OCI-LY7 (cell line): ENCODE measurements at regions of chr19 and their contacts with region 1.

Region 1: GRCh38 chr19:47273978-47274890 is at the start of gene INAFM1:
- DNase-seq: peak; percentile 93
- H3K4me3 ChIP-seq: peak within 1 kb of the TSS; percentile 81
- H3K27ac ChIP-seq: peak within 1 kb of the TSS; percentile 84
- H3K4me1 ChIP-seq: peaks cover 21% of the 10 kb centered on the region
- CTCF ChIP-seq: no peak
- total RNA-seq, gene INAFM1: 4.6 and 5.0 TPM in 2 replicates

Region 2: GRCh38 chr19:47256688-47257443 is 17.4 kb before region 1 on chr19:
- CTCF ChIA-PET with region 1: interaction called, 3 read pairs
- POLR2A ChIA-PET with region 1: interaction called, 6 read pairs
- intact Hi-C with region 1: loop called (anchors 1 kb)
- DNase-seq: peak; percentile 100
- H3K4me3 ChIP-seq: peak overlapping the region; percentile 72
- H3K27ac ChIP-seq: peak overlapping the region; percentile 59
- H3K4me1 ChIP-seq: peaks cover 14% of the 10 kb centered on the region
- CTCF ChIP-seq: no peak

Region 3: GRCh38 chr19:47324502-47324901 is 50.3 kb after region 1 on chr19:
- CTCF ChIA-PET with region 1: no interaction called
- POLR2A ChIA-PET with region 1: no interaction called
- intact Hi-C with region 1: no loop called
- DNase-seq: no peak
- H3K4me3 ChIP-seq: no peak overlapping the region
- H3K27ac ChIP-seq: no peak overlapping the region
- H3K4me1 ChIP-seq: no peaks in the 10 kb centered on the region
- CTCF ChIP-seq: no peak

Region 4: GRCh38 chr19:47824396-47824795 is 550.2 kb after region 1 on chr19:
- CTCF ChIA-PET with region 1: no interaction called
- POLR2A ChIA-PET with region 1: no interaction called
- intact Hi-C with region 1: no loop called
- DNase-seq: no peak
- H3K4me3 ChIP-seq: no peak overlapping the region
- H3K27ac ChIP-seq: no peak overlapping the region
- H3K4me1 ChIP-seq: no peaks in the 10 kb centered on the region
- CTCF ChIP-seq: no peak